ENCODE measurements at regions of chr10 and their contacts with region 1.

Region 1: DNA sequence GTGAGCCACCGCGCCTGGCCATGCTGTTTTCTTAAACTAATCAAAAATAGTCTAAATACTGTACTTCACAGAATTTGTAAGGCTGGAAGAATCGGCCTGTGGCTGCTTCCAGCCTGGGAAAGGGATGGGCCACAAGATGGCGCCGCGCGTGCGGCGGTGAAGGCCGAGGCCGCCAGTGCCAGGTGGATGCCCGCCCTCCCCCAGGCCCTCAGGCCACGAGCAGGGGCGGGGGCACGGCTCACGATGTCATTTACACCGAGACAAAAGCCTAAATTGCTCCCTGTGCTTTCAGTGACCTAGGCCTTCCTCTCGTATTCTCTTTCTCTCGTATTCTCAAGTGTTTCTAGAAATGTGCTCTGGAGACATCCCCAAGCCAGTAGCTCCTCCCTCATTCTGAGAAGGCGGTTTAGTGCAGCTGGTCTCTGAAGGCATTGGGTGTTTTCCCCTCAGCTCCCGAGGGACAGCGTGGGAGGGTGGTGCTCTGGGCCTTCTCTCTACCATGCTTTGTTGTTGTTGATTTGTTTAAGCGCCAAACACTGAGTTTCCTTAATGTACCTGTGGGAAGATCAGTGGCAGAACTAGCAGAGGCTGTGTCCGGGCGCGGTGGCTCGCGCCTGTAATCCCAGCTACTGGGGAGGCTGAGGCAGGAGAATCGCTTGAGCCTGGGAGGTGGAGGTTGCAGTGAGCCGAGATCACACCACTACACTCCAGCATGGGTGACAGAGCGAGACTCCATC is 68.4 kb downstream of the CDC123 start:
- DNase-seq: peak; percentile 89
- H3K4me3 Mint-ChIP-seq: peak overlapping the region; percentile 69
- H3K27ac Mint-ChIP-seq: peak overlapping the region; percentile 77
- H3K4me1 Mint-ChIP-seq: peaks cover 19% of the 10 kb centered on the region
- H3K27me3 Mint-ChIP-seq: no peaks in the 10 kb centered on the region

Region 2: DNA sequence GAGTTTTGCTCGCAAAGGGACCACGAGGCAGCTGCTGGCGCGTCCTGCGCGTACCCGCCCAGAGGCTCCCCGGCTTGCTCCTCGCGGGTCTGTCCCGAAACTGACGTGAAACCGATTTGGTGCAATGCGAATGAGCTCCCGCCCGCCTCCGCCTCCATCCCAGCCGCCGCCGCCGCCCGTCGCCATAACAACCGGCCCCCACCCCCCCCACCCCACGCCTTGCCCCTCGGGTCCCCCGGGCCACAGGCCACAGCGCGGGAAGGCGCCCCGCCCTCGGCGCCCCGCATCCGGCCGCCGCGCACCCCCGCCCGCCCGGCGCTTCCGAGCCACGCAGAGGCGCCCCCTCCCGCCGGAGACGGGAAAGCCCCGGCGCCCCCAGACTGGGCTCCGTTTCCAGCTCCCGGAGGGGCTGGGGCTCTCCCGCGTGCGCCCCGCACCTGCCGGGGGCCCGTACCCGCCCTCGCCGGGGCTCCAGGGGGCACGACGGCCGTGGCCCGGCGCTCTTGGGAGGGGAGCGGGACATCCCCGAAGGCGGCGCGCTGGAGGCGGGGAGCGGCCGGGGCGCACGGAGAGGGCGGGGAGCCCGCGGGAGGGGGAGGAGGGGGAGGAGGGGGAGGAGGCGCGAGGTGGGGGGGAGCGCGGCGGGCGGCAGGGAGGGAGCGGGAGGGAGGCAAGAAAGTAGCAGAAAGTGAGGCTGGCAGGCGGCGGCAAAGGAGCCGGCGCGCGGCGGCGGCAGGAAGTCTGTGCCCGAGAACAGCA is 84.7 kb after region 1 on chr10 and contains the start of gene CAMK1D:
- intact Hi-C with region 1: loop called (anchors 2 kb)
- DNase-seq: peak; percentile 95
- H3K4me3 Mint-ChIP-seq: peak within 1 kb of the TSS; percentile 90
- H3K27ac Mint-ChIP-seq: peak within 1 kb of the TSS; percentile 97
- H3K4me1 Mint-ChIP-seq: peaks cover 34% of the 10 kb centered on the region
- H3K27me3 Mint-ChIP-seq: peaks cover 53% of the 10 kb centered on the region
- total RNA-seq, gene CAMK1D: 5.6 and 6.6 TPM in 2 replicates

Region 3: GRCh38 chr10:12369982-12370381 is 105.6 kb after region 1 on chr10:
- intact Hi-C with region 1: loop called (anchors 1 kb)
- DNase-seq: no peak
- H3K4me3 Mint-ChIP-seq: no peak overlapping the region
- H3K27ac Mint-ChIP-seq: no peak overlapping the region
- H3K4me1 Mint-ChIP-seq: peaks cover 17% of the 10 kb centered on the region
- H3K27me3 Mint-ChIP-seq: no peaks in the 10 kb centered on the region

Region 4: DNA sequence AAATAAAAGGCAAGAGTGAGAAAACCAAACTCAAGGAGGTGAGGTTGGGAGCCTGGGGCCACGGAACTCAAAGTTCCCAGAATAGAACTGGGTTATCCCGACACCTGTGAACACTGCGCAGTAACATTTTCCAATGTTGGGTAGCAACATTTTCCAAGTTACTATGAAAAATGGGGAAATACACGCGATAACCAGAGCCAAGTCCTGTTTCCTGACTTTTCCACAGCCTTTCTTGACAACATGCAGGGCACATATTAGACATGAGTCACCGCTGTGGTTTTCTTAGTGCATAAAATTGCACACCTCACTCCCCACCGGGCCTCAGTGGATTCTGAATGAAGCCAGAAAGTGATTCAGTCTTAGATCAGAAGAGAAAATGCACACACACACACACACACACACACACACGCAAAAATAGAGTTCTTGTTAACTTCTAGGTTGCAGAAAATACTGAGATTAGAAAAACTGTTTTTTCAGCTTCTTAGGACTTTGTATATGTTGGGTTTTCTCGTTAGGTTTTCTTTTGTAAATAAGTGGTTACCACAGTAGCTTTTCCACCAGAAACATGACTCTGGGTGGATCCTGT is 155.0 kb after region 1 on chr10:
- intact Hi-C with region 1: loop called (anchors 5 kb)
- DNase-seq: peak; percentile 78
- H3K4me3 Mint-ChIP-seq: no peak overlapping the region
- H3K27ac Mint-ChIP-seq: peak overlapping the region; percentile 58
- H3K4me1 Mint-ChIP-seq: peaks cover 12% of the 10 kb centered on the region
- H3K27me3 Mint-ChIP-seq: peaks cover 2% of the 10 kb centered on the region

Region 5: GRCh38 chr10:12484941-12485805 is 220.8 kb after region 1 on chr10:
- intact Hi-C with region 1: loop called (anchors 10 kb)
- DNase-seq: peak; percentile 69
- H3K4me3 Mint-ChIP-seq: peak overlapping the region; percentile 47
- H3K27ac Mint-ChIP-seq: peak overlapping the region; percentile 53
- H3K4me1 Mint-ChIP-seq: peaks cover 12% of the 10 kb centered on the region
- H3K27me3 Mint-ChIP-seq: no peaks in the 10 kb centered on the region

Region 6: DNA sequence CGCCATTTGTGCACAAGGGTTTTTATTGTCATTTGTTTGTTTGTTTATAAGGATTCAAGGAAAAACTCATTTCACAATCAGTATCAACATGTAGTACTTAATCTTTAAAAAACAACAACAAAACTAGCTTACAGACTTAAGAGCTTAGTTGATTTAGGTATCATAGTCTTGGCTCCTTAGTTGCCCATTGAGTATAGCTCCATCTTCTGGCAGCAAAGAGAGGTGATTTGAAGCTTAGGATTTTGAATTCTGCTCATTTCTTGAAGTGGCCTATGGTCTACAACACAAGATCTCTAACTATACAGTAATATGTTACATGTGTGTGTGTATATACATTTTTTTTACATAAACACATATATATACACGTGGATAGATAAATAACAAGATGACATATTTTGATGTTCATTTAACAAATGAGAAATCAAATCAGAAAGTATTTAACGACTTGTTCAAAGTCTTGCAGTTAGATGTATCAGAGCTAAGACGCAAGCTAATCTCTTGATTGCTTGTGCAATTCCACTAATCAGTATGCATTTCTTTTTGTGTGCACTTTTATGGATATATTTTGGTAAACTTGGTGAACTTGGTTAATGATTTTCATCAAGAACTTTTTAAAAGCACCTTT is 392.3 kb after region 1 on chr10:
- intact Hi-C with region 1: loop called (anchors 1 kb)
- DNase-seq: peak; percentile 78
- H3K4me3 Mint-ChIP-seq: no peak overlapping the region
- H3K27ac Mint-ChIP-seq: peak overlapping the region; percentile 62
- H3K4me1 Mint-ChIP-seq: peaks cover 26% of the 10 kb centered on the region
- H3K27me3 Mint-ChIP-seq: no peaks in the 10 kb centered on the region

Region 7: GRCh38 chr10:12902135-12902572 is 637.8 kb after region 1 on chr10:
- intact Hi-C with region 1: loop called (anchors 5 kb)
- DNase-seq: peak; percentile 81
- H3K4me3 Mint-ChIP-seq: no peak overlapping the region
- H3K27ac Mint-ChIP-seq: no peak overlapping the region
- H3K4me1 Mint-ChIP-seq: peaks cover 1% of the 10 kb centered on the region
- H3K27me3 Mint-ChIP-seq: no peaks in the 10 kb centered on the region

Region 8: DNA sequence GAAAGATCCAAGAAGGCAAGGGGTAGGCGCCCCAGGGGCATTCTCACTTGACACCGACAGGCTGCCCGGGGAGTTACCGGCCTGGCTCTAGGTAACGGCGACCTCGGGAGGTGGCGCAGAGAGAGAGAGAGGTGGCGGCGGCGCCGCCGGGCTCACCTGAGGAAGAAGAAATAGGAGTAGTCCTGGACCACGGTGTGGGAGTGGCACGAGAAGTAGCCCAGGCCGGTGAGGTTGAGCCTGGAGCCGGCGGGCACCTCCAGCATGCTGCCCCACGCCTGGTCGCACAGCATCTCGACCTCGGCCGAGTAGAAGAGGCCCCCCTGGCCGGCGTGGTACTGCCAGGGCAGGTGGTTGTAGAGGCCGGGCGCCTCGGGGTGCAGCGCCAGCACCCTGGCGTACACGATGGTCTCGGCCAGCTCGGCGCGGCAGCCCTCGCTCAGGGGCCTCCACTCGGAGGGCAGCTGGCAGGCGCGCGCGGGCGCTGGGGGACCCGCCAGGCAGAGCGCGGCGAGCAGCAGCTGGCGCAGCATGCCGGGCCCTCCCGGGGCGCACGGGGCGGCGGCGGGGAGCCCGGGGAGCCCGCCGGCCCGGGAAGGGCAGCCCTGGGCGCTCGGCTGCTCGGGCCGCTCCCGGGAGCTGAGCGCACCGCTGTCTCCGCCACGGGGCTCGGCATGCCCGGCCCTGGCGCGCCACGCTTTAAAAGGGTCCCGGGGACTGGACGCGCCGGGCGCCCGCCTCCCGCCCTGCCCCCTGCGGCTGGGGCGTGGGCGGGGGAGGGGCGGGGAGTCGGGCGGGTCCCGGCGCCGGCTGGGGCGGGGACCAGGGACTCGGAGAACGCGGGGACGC is 736.9 kb after region 1 on chr10 and contains the start of gene CCDC3:
- intact Hi-C with region 1: no loop called
- DNase-seq: no peak
- H3K4me3 Mint-ChIP-seq: peak within 1 kb of the TSS; percentile 58
- H3K27ac Mint-ChIP-seq: no peak within 1 kb of the TSS
- H3K4me1 Mint-ChIP-seq: peaks cover 3% of the 10 kb centered on the region
- H3K27me3 Mint-ChIP-seq: peaks cover 47% of the 10 kb centered on the region
- total RNA-seq, gene CCDC3: 0.07 and 0.09 TPM in 2 replicates